CD8-positive, alpha-beta T cell (primary cell): ENCODE measurements at regions of chr6 and their contacts with region 1.

Region 1: GRCh38 chr6:136289579-136290409 is at the start of gene BCLAF1:
- DNase-seq: peak; percentile 98 to 100 (median 99)
- ATAC-seq: peak; percentile 75
- H3K4me3 ChIP-seq: peak within 1 kb of the TSS; percentile 87 to 92
- H3K4me3 Mint-ChIP-seq: peak within 1 kb of the TSS; percentile 97
- H3K27ac ChIP-seq: peak within 1 kb of the TSS; percentile 98 to 100
- H3K27ac Mint-ChIP-seq: peak within 1 kb of the TSS; percentile 100
- H3K4me1 ChIP-seq: peaks cover 44% of the 10 kb centered on the region
- H3K4me1 Mint-ChIP-seq: peaks cover 44% of the 10 kb centered on the region
- H3K27me3 ChIP-seq: no peaks in the 10 kb centered on the region
- H3K27me3 Mint-ChIP-seq: no peaks in the 10 kb centered on the region
- CTCF ChIP-seq: no peak
- total RNA-seq, gene BCLAF1: 471 to 494 TPM

Region 2: DNA sequence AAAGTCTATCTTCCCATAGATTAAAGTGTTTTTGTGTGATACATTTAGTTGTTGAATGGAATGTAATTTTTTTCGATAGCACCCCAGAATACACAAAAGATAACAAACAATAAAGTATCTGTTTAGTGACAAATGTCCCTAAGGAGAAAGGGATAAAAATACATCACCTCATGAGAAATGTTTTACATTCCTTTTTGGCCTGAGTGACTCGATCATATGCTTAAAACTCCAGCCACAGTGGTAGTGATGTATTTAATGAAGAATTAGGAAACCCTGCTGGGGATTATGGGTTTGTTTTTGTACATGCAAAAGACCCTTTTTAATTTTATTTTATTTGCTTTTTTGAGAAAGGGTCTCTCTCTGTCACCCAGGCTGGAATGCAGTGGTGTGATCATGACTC is 1967.6 kb before region 1 on chr6:
- CTCF ChIA-PET with region 1: no interaction called
- POLR2A ChIA-PET with region 1: no interaction called
- intact Hi-C with region 1: no loop called
- DNase-seq: no peak
- ATAC-seq: no peak
- H3K4me3 ChIP-seq: no peak overlapping the region
- H3K4me3 Mint-ChIP-seq: no peak overlapping the region
- H3K27ac ChIP-seq: no peak overlapping the region
- H3K27ac Mint-ChIP-seq: no peak overlapping the region
- H3K4me1 ChIP-seq: peaks cover 7% of the 10 kb centered on the region
- H3K4me1 Mint-ChIP-seq: peaks cover 11% of the 10 kb centered on the region
- H3K27me3 ChIP-seq: no peaks in the 10 kb centered on the region
- H3K27me3 Mint-ChIP-seq: peaks cover 15% of the 10 kb centered on the region
- CTCF ChIP-seq: no peak

Region 3: GRCh38 chr6:135054569-135055498 is 1235.0 kb before region 1 on chr6 and contains the start of gene HBS1L:
- CTCF ChIA-PET with region 1: no interaction called
- POLR2A ChIA-PET with region 1: interaction called, 5 read pairs
- intact Hi-C with region 1: loop called in 1 of 2 experiments (anchors 5 kb)
- DNase-seq: peak; percentile 91 to 100 (median 96)
- ATAC-seq: peak; percentile 96
- H3K4me3 ChIP-seq: peak within 1 kb of the TSS; percentile 76 to 88
- H3K4me3 Mint-ChIP-seq: peak within 1 kb of the TSS; percentile 98
- H3K27ac ChIP-seq: peak within 1 kb of the TSS; percentile 87 to 90
- H3K27ac Mint-ChIP-seq: peak within 1 kb of the TSS; percentile 99
- H3K4me1 ChIP-seq: peaks cover 25% of the 10 kb centered on the region
- H3K4me1 Mint-ChIP-seq: peaks cover 42% of the 10 kb centered on the region
- H3K27me3 ChIP-seq: no peaks in the 10 kb centered on the region
- H3K27me3 Mint-ChIP-seq: no peaks in the 10 kb centered on the region
- CTCF ChIP-seq: no peak
- total RNA-seq, gene HBS1L: 119 to 123 TPM

Region 4: DNA sequence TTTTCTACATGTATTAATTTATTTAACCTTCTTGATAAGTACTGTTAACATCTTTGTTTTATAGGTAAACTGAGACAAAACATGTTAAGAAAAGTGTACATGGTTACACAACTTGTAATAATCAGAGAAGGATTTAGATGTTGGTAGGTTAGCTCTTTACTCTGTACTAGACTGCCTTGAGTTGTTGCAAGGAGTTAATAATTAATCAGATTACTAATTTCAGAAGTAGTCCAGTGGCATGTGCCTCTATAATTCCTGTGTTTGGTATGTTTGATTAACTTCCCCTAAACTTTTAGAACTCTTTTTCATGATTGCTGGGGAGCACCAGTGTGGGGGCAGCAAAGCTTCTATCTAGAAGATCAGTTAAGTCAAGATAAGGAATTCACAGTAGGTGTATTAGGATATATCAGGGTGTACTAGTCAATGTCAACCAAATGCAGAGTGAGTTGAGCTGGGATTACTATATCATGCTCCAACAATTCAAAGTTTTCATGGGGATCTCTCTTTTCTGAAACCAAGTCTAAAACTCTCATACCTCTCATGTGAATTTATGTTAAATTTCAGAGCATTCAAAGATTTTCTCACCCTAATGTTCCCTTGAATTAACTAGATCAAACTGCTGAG is 662.6 kb before region 1 on chr6:
- CTCF ChIA-PET with region 1: no interaction called
- POLR2A ChIA-PET with region 1: no interaction called
- intact Hi-C with region 1: no loop called
- DNase-seq: no peak
- ATAC-seq: no peak
- H3K4me3 ChIP-seq: no peak overlapping the region
- H3K4me3 Mint-ChIP-seq: no peak overlapping the region
- H3K27ac ChIP-seq: no peak overlapping the region
- H3K27ac Mint-ChIP-seq: no peak overlapping the region
- H3K4me1 ChIP-seq: peaks cover 13% of the 10 kb centered on the region
- H3K4me1 Mint-ChIP-seq: peaks cover 11% of the 10 kb centered on the region
- H3K27me3 ChIP-seq: no peaks in the 10 kb centered on the region
- H3K27me3 Mint-ChIP-seq: no peaks in the 10 kb centered on the region
- CTCF ChIP-seq: no peak

Region 5: DNA sequence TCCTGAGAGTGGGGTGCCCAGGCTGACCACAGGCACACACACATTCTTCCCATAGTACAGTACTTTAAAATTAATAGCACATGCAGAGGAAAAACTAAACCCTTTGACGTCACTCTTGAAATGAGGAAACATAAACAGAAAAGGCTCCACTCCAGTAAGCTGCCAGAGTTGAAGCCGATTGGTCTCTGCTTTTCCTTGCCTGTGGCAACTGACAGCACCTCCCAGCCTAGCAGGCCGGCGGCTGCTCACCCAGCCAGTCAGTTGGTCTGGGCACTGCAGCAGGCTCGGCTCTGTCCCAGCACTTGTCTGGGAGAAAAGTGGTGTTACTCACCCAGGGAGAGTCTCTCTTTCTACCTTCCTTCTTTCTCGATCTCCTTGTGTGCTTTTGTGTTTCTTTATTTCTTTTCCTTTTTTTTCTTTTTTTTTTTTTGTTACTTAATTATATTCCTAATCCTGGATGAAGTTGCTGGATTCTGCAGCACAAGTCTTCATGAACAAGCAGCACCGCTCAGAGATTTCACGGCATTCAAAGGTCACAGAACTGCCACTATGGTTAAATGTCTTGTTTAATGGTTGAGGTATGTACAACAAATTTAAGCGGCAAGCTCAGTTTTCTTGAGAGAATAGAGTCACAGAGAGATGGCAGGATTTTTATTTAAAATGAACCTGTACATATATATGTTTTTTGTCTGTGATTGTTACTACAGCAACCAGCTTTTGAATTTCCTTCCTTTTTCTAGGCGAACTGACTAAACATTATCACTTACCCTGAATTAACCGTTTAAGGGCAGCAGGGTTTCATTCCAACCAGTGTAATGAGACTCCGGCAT is 438.1 kb before region 1 on chr6 and contains the start of gene PDE7B:
- CTCF ChIA-PET with region 1: no interaction called
- POLR2A ChIA-PET with region 1: no interaction called
- intact Hi-C with region 1: no loop called
- DNase-seq: peak; percentile 5 to 64 (median 32)
- ATAC-seq: peak; percentile 74
- H3K4me3 ChIP-seq: peak within 1 kb of the TSS; percentile 38 to 42
- H3K4me3 Mint-ChIP-seq: peak within 1 kb of the TSS; percentile 78
- H3K27ac ChIP-seq: peak within 1 kb of the TSS in 1 of 2 experiments; percentile 17
- H3K27ac Mint-ChIP-seq: peak within 1 kb of the TSS; percentile 79
- H3K4me1 ChIP-seq: peaks cover 4% of the 10 kb centered on the region
- H3K4me1 Mint-ChIP-seq: peaks cover 32% of the 10 kb centered on the region
- H3K27me3 ChIP-seq: no peaks in the 10 kb centered on the region
- H3K27me3 Mint-ChIP-seq: no peaks in the 10 kb centered on the region
- CTCF ChIP-seq: no peak
- total RNA-seq, gene PDE7B: 0.11 to 0.22 TPM

Region 6: GRCh38 chr6:135994857-135995544 is 294.8 kb before region 1 on chr6:
- CTCF ChIA-PET with region 1: no interaction called
- POLR2A ChIA-PET with region 1: no interaction called
- intact Hi-C with region 1: no loop called
- DNase-seq: no peak
- ATAC-seq: no peak
- H3K4me3 ChIP-seq: no peak overlapping the region
- H3K4me3 Mint-ChIP-seq: no peak overlapping the region
- H3K27ac ChIP-seq: no peak overlapping the region
- H3K27ac Mint-ChIP-seq: no peak overlapping the region
- H3K4me1 ChIP-seq: no peaks in the 10 kb centered on the region
- H3K4me1 Mint-ChIP-seq: no peaks in the 10 kb centered on the region
- H3K27me3 ChIP-seq: no peaks in the 10 kb centered on the region
- H3K27me3 Mint-ChIP-seq: peaks cover 2% of the 10 kb centered on the region
- CTCF ChIP-seq: no peak

Region 7: DNA sequence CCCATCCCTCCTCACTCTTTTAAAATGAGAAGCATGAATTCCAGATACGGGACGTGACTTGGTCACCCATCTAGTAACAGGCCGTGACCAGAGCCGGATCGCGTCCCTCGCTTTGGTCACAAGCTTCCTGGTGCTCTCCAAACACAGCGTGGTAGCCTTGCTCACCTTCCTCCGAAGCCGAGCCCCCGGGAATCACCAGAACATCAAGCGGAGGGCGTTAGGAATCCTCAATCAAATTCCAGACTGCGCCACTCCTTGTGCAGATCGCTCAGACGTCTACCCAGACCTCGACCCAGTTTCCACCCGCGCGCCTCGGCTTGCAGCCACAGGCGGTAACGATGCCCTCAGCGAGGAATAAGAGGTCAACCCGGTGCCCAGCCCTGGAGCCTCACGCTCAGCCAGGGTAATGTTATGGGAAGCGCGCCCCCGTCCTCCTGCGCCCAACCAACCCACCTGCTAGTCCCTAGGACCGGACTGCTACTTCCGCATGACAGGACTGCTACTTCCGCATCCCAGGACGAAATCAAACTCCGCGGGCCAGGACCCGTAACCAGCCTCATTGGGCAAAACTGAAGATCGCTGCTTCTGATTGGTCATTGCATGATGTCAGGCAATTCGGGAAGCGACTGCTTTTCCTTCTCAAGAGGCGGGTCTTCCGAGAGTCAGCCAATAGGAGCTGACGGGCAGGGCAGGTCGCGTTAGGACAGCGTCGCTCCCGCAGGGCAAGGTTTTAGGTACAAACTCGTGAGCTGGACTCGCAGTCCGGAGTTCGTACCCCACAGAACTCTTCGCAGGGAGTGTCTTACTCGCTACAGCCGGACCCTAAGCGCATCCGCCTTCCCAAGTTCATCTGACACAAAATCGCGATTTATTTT is 39.7 kb before region 1 on chr6 and contains the start of gene MTFR2:
- CTCF ChIA-PET with region 1: interaction called, 8 read pairs
- POLR2A ChIA-PET with region 1: interaction called, 132 read pairs
- intact Hi-C with region 1: loop called (anchors 1 to 2 kb)
- DNase-seq: peak; percentile 85 to 99 (median 92)
- ATAC-seq: peak; percentile 97
- H3K4me3 ChIP-seq: peak within 1 kb of the TSS; percentile 57 to 74
- H3K4me3 Mint-ChIP-seq: peak within 1 kb of the TSS; percentile 97
- H3K27ac ChIP-seq: peak within 1 kb of the TSS in 1 of 2 experiments; percentile 17
- H3K27ac Mint-ChIP-seq: peak within 1 kb of the TSS; percentile 71
- H3K4me1 ChIP-seq: peaks cover 11% of the 10 kb centered on the region
- H3K4me1 Mint-ChIP-seq: peaks cover 36% of the 10 kb centered on the region
- H3K27me3 ChIP-seq: no peaks in the 10 kb centered on the region
- H3K27me3 Mint-ChIP-seq: no peaks in the 10 kb centered on the region
- CTCF ChIP-seq: no peak
- total RNA-seq, gene MTFR2: 1.3 to 1.5 TPM

Region 8: DNA sequence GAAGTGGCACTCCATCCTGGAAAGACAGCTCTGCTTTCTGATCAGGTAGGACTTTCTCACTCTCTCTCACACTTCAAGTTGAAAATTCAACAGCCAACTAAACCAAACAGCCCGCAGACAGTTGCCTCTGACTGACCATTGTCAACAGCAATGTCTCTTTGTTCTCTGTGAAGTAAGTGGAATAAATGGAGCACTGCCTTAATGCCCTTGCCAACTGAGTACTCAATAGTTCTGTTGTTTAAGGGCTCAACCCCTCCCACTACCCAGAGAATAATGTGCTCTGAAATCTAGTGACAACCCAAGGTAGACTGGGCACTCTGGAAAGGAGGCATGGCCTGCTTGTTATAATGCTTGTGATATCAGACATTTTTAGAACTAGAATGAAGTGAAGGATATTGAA is 16.7 kb after region 1 on chr6:
- CTCF ChIA-PET with region 1: interaction called, 4 read pairs
- POLR2A ChIA-PET with region 1: interaction called, 10 read pairs
- intact Hi-C with region 1: no loop called
- DNase-seq: no peak
- ATAC-seq: no peak
- H3K4me3 ChIP-seq: no peak overlapping the region
- H3K4me3 Mint-ChIP-seq: no peak overlapping the region
- H3K27ac ChIP-seq: no peak overlapping the region
- H3K27ac Mint-ChIP-seq: no peak overlapping the region
- H3K4me1 ChIP-seq: no peaks in the 10 kb centered on the region
- H3K4me1 Mint-ChIP-seq: no peaks in the 10 kb centered on the region
- H3K27me3 ChIP-seq: no peaks in the 10 kb centered on the region
- H3K27me3 Mint-ChIP-seq: peaks cover 2% of the 10 kb centered on the region
- CTCF ChIP-seq: no peak

Region 9: DNA sequence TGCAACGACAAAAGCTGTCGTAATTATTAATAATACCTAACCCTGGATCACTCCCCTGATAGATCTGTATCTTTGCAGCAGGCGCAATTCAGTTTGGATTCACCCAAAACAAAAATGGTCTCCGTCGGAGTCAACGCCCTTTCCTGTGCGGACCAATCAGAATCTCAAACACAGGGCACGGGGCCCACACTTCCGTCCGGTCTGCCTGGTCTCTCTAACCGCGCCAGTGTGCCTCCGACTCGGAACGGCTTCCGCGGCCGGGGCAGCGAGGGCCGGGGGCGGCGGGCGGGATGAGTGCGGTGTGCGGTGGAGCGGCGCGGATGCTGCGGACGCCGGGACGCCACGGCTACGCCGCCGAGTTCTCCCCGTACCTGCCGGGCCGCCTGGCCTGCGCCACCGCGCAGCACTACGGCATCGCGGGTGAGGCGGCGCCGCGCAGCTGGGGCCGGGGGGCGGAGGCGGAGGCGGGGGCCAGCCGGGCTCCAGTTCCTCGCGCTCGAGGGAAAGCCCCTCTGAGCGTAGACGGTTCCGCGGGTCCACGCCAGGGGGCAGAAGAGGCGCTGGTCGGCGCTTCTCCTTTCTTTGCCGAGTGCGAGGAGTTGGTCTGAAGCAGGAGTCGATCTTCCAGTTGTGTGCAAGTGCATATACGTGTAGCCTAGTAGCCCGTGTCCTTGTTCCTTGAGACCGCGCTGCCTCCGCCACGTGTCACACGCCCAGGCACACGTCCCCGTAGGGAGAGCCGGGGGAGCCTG is 532.8 kb after region 1 on chr6 and contains the start of gene PEX7:
- CTCF ChIA-PET with region 1: interaction called, 4 read pairs
- POLR2A ChIA-PET with region 1: interaction called, 7 read pairs
- intact Hi-C with region 1: loop called (anchors 1 to 10 kb)
- DNase-seq: peak; percentile 76 to 94 (median 84)
- ATAC-seq: peak; percentile 91
- H3K4me3 ChIP-seq: peak within 1 kb of the TSS; percentile 57 to 77
- H3K4me3 Mint-ChIP-seq: peak within 1 kb of the TSS; percentile 93
- H3K27ac ChIP-seq: peak within 1 kb of the TSS; percentile 70 to 82
- H3K27ac Mint-ChIP-seq: peak within 1 kb of the TSS; percentile 95
- H3K4me1 ChIP-seq: peaks cover 14% of the 10 kb centered on the region
- H3K4me1 Mint-ChIP-seq: peaks cover 30% of the 10 kb centered on the region
- H3K27me3 ChIP-seq: no peaks in the 10 kb centered on the region
- H3K27me3 Mint-ChIP-seq: peaks cover 3% of the 10 kb centered on the region
- CTCF ChIP-seq: peak; percentile 68
- total RNA-seq, gene PEX7: 2.6 to 2.8 TPM